PC-9 (cell line): ENCODE measurements at regions of chr1 and their contacts with region 1.

Region 1: GRCh38 chr1:202056644-202057461 is 46.5 kb downstream of the ELF3 start:
- DNase-seq: peak; percentile 97 to 98
- H3K4me3 ChIP-seq: no peak overlapping the region
- H3K27ac ChIP-seq: peak overlapping the region; percentile 98
- H3K4me1 ChIP-seq: peaks cover 64% of the 10 kb centered on the region
- H3K27me3 ChIP-seq: no peaks in the 10 kb centered on the region
- CTCF ChIP-seq: no peak

Region 2: DNA sequence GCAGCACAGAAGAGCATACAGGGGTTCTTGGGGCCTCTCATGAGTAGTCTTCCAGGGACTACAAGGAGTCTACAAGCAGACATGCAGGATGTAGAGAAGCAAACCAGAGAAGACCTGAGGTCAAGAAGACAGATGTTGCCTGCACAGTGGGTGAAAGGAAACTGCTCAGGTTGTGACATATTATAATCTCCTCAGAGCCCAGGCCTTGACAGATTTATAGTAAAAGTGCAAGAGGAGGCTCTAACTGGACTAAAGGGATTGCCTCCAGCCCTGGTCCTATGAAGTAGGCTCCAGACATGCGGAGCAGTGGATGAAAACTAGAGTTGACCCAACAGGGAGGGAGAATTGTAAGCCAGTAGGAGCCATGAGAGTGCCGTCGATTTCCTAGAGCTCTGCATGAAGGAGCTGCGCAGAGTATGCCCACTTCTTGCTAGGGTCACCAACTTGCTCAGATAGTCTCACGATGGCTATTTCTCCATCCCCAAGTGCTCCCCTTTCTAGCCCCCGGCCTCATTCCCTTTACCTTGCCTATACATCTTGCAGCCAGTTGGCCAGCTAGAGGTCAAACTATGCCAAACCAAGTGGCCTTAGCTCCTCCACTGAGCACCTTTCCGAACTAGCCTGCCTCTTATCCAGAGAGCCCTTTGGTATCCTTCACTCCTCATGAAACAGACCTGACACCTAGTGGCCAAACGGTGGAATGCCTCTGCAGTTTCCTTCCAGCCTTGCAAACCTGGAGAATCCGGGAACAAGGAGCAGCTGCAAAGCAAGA is 264.1 kb before region 1 on chr1:
- CTCF ChIA-PET with region 1: no interaction called
- POLR2A ChIA-PET with region 1: no interaction called
- intact Hi-C with region 1: no loop called
- DNase-seq: peak; percentile 65 to 73
- H3K4me3 ChIP-seq: no peak overlapping the region
- H3K27ac ChIP-seq: no peak overlapping the region
- H3K4me1 ChIP-seq: no peaks in the 10 kb centered on the region
- H3K27me3 ChIP-seq: no peaks in the 10 kb centered on the region
- CTCF ChIP-seq: peak; percentile 98

Region 3: GRCh38 chr1:202034683-202035462 is 22.0 kb before region 1 on chr1:
- CTCF ChIA-PET with region 1: interaction called, 6 read pairs
- POLR2A ChIA-PET with region 1: interaction called, 35 read pairs
- intact Hi-C with region 1: loop called (anchors 1 kb)
- DNase-seq: peak; percentile 98
- H3K4me3 ChIP-seq: peak overlapping the region; percentile 26; the same call in 1 of the 2 replicates
- H3K27ac ChIP-seq: peak overlapping the region; percentile 89
- H3K4me1 ChIP-seq: peaks cover 68% of the 10 kb centered on the region
- H3K27me3 ChIP-seq: no peaks in the 10 kb centered on the region
- CTCF ChIP-seq: no peak

Region 4: DNA sequence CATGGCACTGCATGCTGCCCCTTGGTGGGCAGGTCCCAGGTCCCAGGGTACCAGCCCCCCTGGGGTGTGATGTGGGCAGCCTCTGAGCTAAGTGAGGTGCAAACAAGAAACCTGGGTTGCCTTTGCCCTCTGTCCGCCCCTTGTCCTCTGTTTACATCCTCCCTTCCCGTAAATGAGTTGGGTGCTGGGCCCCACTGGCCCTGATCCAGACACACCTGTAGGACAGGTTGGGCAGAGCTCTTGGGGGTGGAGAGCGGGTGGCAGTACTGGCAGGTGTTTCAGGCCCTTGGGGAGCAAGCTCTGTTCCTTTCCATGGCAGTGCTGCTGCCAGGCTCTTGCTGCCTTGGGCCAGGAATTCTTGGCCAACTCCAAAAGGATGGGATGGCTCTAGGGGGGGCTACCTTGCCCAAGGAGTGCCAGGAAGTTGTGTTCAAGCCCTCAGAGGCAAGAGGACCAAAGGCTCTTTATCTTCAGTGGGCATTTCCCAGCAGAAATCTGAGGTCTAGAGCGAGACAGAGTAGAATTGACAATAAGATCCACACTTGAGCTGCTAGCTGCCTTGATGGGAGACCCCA is 10.5 kb before region 1 on chr1:
- CTCF ChIA-PET with region 1: interaction called, 4 read pairs
- POLR2A ChIA-PET with region 1: interaction called, 32 read pairs
- intact Hi-C with region 1: loop called (anchors 1 kb)
- DNase-seq: peak; percentile 95 to 97
- H3K4me3 ChIP-seq: peak overlapping the region; percentile 24; the same call in 1 of the 2 replicates
- H3K27ac ChIP-seq: peak overlapping the region; percentile 98
- H3K4me1 ChIP-seq: peaks cover 77% of the 10 kb centered on the region
- H3K27me3 ChIP-seq: no peaks in the 10 kb centered on the region
- CTCF ChIP-seq: no peak

Region 5: GRCh38 chr1:202085682-202086404 is 29.0 kb after region 1 on chr1:
- CTCF ChIA-PET with region 1: no interaction called
- POLR2A ChIA-PET with region 1: interaction called, 4 read pairs
- intact Hi-C with region 1: loop called (anchors 1 kb)
- DNase-seq: peak; percentile 41 to 53
- H3K4me3 ChIP-seq: no peak overlapping the region
- H3K27ac ChIP-seq: peak overlapping the region; percentile 44
- H3K4me1 ChIP-seq: peaks cover 47% of the 10 kb centered on the region
- H3K27me3 ChIP-seq: no peaks in the 10 kb centered on the region
- CTCF ChIP-seq: no peak

Region 6: GRCh38 chr1:202105539-202106276 is 48.9 kb after region 1 on chr1:
- CTCF ChIA-PET with region 1: no interaction called
- POLR2A ChIA-PET with region 1: interaction called, 31 read pairs
- intact Hi-C with region 1: loop called (anchors 1 kb)
- DNase-seq: peak; percentile 91 to 95
- H3K4me3 ChIP-seq: peak overlapping the region; percentile 26; the same call in 1 of the 2 replicates
- H3K27ac ChIP-seq: peak overlapping the region; percentile 99
- H3K4me1 ChIP-seq: peaks cover 76% of the 10 kb centered on the region
- H3K27me3 ChIP-seq: no peaks in the 10 kb centered on the region
- CTCF ChIP-seq: no peak

Region 7: DNA sequence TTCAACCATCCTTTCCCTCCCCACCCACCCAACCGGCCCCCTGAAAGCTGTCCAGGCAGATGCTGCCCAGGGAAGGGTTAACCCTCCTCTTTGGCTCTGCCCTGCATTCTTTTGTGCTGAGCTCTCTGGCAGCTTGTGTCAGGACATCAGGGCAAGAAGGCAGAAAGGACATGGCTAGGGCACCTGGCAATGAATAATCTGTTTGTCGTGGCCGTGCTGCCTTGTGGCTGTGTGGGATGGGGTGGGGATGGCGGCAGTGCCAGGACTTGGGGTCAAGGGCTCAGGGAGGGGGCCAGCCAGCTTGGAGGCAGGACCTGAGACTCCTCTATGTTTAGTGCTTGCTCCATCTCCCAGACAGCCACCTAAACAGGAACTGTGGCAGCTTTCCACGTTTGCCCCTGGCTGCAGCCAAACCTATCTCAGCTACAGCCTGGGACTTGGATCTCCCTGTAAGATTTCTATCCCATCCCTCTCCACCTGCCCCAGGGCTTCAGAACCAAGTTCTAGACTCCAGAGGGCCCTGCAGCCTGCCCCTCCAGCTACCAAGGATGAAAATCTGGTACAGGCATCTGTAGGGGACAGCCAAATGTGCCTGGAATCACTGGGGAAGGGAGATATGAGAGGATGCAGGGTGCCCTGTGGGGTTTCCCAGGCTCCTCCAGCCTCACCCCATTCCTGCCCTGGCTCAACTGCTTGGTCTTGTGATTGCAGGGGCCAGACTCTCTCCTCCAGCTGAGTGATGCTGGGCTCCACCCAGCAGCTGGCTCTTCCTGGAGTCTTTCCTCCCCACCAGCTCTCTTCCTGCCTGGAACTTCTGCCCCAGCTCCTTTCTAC is 56.2 kb after region 1 on chr1:
- CTCF ChIA-PET with region 1: interaction called, 12 read pairs
- POLR2A ChIA-PET with region 1: interaction called, 31 read pairs
- intact Hi-C with region 1: loop called (anchors 1 kb)
- DNase-seq: peak; percentile 67 to 86
- H3K4me3 ChIP-seq: peak overlapping the region; percentile 23; the same call in 1 of the 2 replicates
- H3K27ac ChIP-seq: peak overlapping the region; percentile 97
- H3K4me1 ChIP-seq: peaks cover 92% of the 10 kb centered on the region
- H3K27me3 ChIP-seq: no peaks in the 10 kb centered on the region
- CTCF ChIP-seq: no peak